ENCODE measurements at regions of chr17 and their contacts with region 1.

Region 1: GRCh38 chr17:29369831-29370735 is 20.1 kb upstream of the TAOK1 start:
- DNase-seq: peak in 3 of 6 donors; percentile 16 to 50 (median 26)
- ATAC-seq: peak; percentile 94 to 98 (median 97)
- H3K4me3 ChIP-seq: no peak overlapping the region
- H3K27ac ChIP-seq: no peak overlapping the region
- H3K4me1 ChIP-seq: no peaks in the 10 kb centered on the region
- H3K27me3 ChIP-seq: no peaks in the 10 kb centered on the region
- CTCF ChIP-seq: peak; percentile 51 to 82 (median 74)

Region 2: GRCh38 chr17:28792877-28793661 is 577.0 kb before region 1 on chr17:
- intact Hi-C with region 1: no loop called
- DNase-seq: no peak
- ATAC-seq: no peak
- H3K4me3 ChIP-seq: no peak overlapping the region
- H3K27ac ChIP-seq: no peak overlapping the region
- H3K4me1 ChIP-seq: no peaks in the 10 kb centered on the region
- H3K27me3 ChIP-seq: no peaks in the 10 kb centered on the region
- CTCF ChIP-seq: no peak

Region 3: DNA sequence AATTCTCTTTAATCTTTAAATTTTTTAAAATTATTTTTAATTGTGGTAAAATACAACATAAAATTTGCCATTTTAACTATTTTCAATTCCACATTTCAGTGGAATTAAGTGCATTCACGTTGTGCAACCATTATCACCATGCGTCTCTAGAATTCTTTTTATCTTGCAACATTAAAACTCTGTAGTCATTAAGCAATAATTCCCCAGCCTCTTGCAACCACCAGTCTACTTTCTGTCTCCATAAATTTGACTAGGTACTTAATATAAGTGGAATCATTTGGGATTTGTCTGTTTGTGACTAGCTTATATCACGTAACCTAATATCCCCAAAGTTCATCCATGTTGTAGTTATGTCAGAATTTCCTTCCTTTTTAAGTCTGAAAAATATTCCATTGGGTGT is 99.2 kb after region 1 on chr17:
- intact Hi-C with region 1: loop called in 1 of 3 experiments (anchors 10 kb)
- DNase-seq: no peak
- ATAC-seq: no peak
- H3K4me3 ChIP-seq: no peak overlapping the region
- H3K27ac ChIP-seq: no peak overlapping the region
- H3K4me1 ChIP-seq: no peaks in the 10 kb centered on the region
- H3K27me3 ChIP-seq: no peaks in the 10 kb centered on the region
- CTCF ChIP-seq: no peak

Region 4: DNA sequence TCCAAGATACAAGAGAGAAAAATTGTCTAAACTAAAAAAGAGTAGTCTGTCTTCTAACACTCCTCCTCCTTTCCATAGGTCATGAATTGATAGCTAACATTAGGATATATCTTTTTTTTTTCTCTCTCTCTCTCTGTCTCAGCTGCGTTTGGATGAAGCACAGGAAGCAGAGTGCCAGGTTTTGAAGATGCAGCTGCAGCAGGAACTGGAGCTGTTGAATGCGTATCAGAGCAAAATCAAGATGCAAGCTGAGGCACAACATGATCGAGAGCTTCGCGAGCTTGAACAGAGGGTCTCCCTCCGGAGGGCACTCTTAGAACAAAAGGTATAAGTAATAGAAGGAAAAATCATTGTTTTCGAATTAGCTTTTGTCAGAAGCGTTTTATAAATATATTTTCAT is 163.9 kb after region 1 on chr17:
- intact Hi-C with region 1: loop called in 1 of 3 experiments (anchors 5 kb)
- DNase-seq: no peak
- ATAC-seq: no peak
- H3K4me3 ChIP-seq: no peak overlapping the region
- H3K27ac ChIP-seq: no peak overlapping the region
- H3K4me1 ChIP-seq: no peaks in the 10 kb centered on the region
- H3K27me3 ChIP-seq: no peaks in the 10 kb centered on the region
- CTCF ChIP-seq: no peak

Region 5: GRCh38 chr17:29549177-29549923 is 179.3 kb after region 1 on chr17:
- intact Hi-C with region 1: loop called in 1 of 3 experiments (anchors 10 kb)
- DNase-seq: no peak
- ATAC-seq: peak in 2 of 4 donors; percentile 66 to 71
- H3K4me3 ChIP-seq: no peak overlapping the region
- H3K27ac ChIP-seq: no peak overlapping the region
- H3K4me1 ChIP-seq: no peaks in the 10 kb centered on the region
- H3K27me3 ChIP-seq: no peaks in the 10 kb centered on the region
- CTCF ChIP-seq: no peak

Measured in pancreas (tissue), 10 donors.